ENCODE measurements at regions of chr6 and their contacts with region 1.

Region 1: DNA sequence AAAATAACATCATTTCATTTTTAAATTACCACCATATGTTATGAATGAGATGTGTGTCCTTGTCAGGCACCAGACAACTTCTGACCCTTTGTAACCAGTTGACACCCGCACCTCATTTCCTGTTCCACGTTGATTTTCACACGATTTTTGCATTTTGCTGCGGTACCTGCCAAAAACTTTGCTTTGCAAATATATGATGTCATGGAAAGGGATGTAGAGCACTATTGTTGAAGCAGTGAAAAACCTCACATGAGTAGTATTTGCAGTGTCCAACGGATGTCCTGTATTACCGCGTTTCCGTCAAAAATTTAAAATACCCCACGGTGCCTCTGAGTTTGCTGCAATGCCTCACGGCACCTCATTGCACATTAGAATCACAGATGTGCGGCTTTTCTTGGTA is 115.6 kb downstream of the MTHFD1L start:
- DNase-seq: no peak
- H3K4me3 ChIP-seq: no peak overlapping the region
- H3K27ac ChIP-seq: no peak overlapping the region
- H3K4me1 ChIP-seq: no peaks in the 10 kb centered on the region
- H3K27me3 ChIP-seq: no peaks in the 10 kb centered on the region
- CTCF ChIP-seq: no peak

Region 2: GRCh38 chr6:151330134-151330696 is 349.1 kb after region 1 on chr6:
- CTCF ChIA-PET with region 1: interaction called, 13 read pairs
- POLR2A ChIA-PET with region 1: no interaction called
- intact Hi-C with region 1: no loop called
- DNase-seq: no peak
- H3K4me3 ChIP-seq: no peak overlapping the region
- H3K27ac ChIP-seq: no peak overlapping the region
- H3K4me1 ChIP-seq: peaks cover 12% of the 10 kb centered on the region
- H3K27me3 ChIP-seq: no peaks in the 10 kb centered on the region
- CTCF ChIP-seq: no peak

Measured in PC-9 (cell line).